ENCODE measurements at regions of chr12 and their contacts with region 1.

Region 1: GRCh38 chr12:124774462-124775167 is 89.0 kb downstream of the SCARB1 start:
- DNase-seq: peak; percentile 90
- H3K4me3 Mint-ChIP-seq: peak overlapping the region; percentile 61
- H3K27ac Mint-ChIP-seq: peak overlapping the region; percentile 68
- H3K4me1 Mint-ChIP-seq: peaks cover 34% of the 10 kb centered on the region
- H3K27me3 Mint-ChIP-seq: peaks cover 24% of the 10 kb centered on the region

Region 2: GRCh38 chr12:124453419-124454351 is 320.9 kb before region 1 on chr12:
- intact Hi-C with region 1: loop called (anchors 2 kb)
- DNase-seq: peak; percentile 92
- H3K4me3 Mint-ChIP-seq: peak overlapping the region; percentile 67
- H3K27ac Mint-ChIP-seq: peak overlapping the region; percentile 75
- H3K4me1 Mint-ChIP-seq: peaks cover 37% of the 10 kb centered on the region
- H3K27me3 Mint-ChIP-seq: no peaks in the 10 kb centered on the region

Region 3: GRCh38 chr12:124545508-124546418 is 228.9 kb before region 1 on chr12:
- intact Hi-C with region 1: loop called (anchors 2 kb)
- DNase-seq: peak; percentile 85
- H3K4me3 Mint-ChIP-seq: peak overlapping the region; percentile 25
- H3K27ac Mint-ChIP-seq: peak overlapping the region; percentile 57
- H3K4me1 Mint-ChIP-seq: peaks cover 38% of the 10 kb centered on the region
- H3K27me3 Mint-ChIP-seq: no peaks in the 10 kb centered on the region

Region 4: DNA sequence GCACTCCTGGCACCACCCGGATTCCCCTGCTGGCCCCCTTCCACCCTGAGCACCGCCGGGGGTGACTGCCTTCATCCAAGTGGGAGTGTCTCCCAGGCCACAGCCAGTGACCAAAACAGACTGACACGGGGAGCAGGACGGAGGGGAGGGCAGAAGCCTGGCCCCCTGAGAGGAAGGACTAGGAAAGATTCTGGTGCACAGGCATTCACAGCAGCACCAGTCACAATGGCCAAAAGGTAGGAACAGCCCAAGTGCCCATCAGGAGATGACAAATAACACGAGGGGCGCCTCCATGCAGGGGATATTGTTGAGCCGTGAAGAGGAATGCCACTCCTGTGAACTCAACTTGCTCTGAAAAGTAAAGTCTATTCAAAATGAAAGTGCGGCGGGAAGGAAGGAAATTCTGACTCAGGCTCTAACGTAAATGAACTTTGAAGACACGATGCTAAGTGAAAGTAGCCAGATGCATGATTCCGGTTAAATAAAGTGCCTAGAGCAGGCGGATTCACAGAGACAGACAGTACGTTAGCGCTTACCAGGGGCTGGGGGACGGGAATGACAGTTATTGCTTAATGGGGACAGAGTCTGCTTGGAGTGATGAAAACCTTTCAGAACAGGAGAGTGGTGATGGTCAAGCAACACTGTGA is 61.1 kb before region 1 on chr12:
- intact Hi-C with region 1: loop called (anchors 1 kb)
- DNase-seq: peak; percentile 90
- H3K4me3 Mint-ChIP-seq: peak overlapping the region; percentile 58
- H3K27ac Mint-ChIP-seq: peak overlapping the region; percentile 78
- H3K4me1 Mint-ChIP-seq: peaks cover 18% of the 10 kb centered on the region
- H3K27me3 Mint-ChIP-seq: peaks cover 20% of the 10 kb centered on the region

Region 5: GRCh38 chr12:124796303-124796960 is 21.8 kb after region 1 on chr12:
- intact Hi-C with region 1: loop called (anchors 2 kb)
- DNase-seq: no peak
- H3K4me3 Mint-ChIP-seq: no peak overlapping the region
- H3K27ac Mint-ChIP-seq: peak overlapping the region; percentile 15
- H3K4me1 Mint-ChIP-seq: peaks cover 10% of the 10 kb centered on the region
- H3K27me3 Mint-ChIP-seq: no peaks in the 10 kb centered on the region

Region 6: DNA sequence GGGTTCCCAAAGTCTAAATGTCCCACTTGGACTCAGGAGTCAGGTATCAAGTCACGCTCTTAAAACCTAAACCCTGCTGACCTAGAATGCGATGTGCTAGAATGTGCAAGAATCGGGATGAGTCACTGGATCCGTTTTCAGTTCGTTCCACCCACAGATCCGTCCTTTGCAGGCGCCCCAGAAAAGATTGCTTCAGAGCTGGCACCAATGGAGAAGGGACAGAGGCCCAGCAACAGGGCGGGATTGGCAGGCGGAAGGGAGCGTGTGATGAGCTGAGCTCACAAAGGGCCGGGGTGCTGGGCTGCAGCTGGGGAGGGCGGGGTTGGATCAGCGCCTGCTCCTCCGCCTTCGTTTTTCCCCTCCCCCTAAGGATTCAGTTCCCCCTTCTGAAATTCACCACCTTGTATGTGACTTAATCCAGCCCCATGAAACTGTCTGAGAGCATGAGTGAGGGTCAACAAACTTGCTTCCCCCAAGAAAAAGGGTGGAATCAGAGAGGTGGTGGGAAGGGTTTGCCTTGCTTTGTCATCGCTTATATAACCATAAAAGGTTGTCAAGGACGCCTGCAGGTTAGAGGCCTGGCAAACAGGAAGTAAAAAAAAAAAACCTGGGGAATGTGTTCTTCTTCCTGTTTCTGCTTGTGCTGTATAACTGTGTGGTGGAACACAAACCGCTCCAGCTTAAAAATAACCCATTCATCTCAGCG is 142.7 kb after region 1 on chr12:
- intact Hi-C with region 1: loop called (anchors 1 kb)
- DNase-seq: peak; percentile 97
- H3K4me3 Mint-ChIP-seq: peak overlapping the region; percentile 99
- H3K27ac Mint-ChIP-seq: peak overlapping the region; percentile 100
- H3K4me1 Mint-ChIP-seq: peaks cover 75% of the 10 kb centered on the region
- H3K27me3 Mint-ChIP-seq: peaks cover 2% of the 10 kb centered on the region